Gastrocnemius medialis (tissue), 4 donors: ENCODE measurements at regions of chr13 and their contacts with region 1.

Region 1: DNA sequence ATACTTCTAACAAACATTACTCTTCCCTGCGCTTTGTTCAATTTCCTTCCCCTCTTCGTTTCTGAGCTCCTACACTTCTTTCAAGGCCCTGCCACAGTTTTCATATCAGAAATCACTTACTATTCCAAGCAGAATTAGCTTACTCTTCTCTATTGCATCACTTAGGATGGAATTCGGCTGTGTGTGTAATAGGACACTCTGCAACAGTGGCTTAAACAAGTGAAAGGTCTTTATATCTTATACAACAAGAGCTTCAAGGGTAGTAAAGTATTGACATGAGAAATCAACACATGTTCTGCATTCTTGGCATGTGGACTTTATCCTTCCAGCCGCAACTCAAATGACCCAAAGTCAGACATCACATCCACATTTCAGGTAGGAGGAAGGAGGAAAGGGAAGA is 279.6 kb downstream of the PCDH20 start:
- DNase-seq: no peak
- ATAC-seq: peak; percentile 76 to 89
- H3K4me3 ChIP-seq: no peak overlapping the region
- H3K27ac ChIP-seq: peak overlapping the region in 3 of 4 donors; percentile 12 to 60 (median 39)
- H3K4me1 ChIP-seq: peaks cover 0 to under 1% of the 10 kb centered on the region in 2 donors
- H3K27me3 ChIP-seq: no peaks in the 10 kb centered on the region
- CTCF ChIP-seq: no peak
- POLR2A ChIP-seq: no peak

Region 2: DNA sequence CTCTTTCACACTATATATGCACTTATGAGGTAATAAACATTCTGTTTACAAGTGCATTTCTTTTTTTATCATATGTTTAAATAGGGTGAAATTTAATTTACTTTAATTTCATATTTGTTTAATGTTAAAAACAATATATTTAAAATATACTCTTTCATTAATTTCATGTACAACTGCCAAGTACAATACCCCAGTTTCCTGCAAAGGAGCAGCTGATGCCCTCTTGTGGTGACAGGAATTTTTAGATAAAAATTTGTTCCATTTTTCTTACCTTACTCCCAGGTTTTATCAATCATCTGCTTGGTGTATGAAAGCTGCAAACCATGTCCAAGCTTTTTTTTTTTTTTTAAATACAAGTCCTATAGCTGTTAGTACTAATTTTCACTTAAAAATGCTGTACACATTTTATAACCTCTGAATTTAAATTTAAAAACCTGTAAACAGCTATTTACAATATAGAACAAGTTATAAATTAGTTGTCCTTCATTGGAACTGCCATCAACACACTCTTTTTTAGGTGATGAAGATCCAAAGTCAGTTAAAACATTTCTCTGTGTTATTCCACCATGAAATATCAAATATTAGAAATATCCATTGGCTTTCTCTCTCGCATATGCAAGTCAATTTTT is 274.7 kb after region 1 on chr13:
- in situ Hi-C with region 1: no loop called
- intact Hi-C with region 1: loop called (anchors 10 kb)
- DNase-seq: no peak
- ATAC-seq: no peak
- H3K4me3 ChIP-seq: no peak overlapping the region
- H3K27ac ChIP-seq: no peak overlapping the region
- H3K4me1 ChIP-seq: peaks cover 0 to 8% of the 10 kb centered on the region in 2 donors
- H3K27me3 ChIP-seq: peaks cover 0 to 15% (median 14%) of the 10 kb centered on the region in 3 donors
- CTCF ChIP-seq: peak in 1 of 5 experiments; percentile 30
- POLR2A ChIP-seq: no peak